ENCODE measurements at regions of chr13 and their contacts with region 1.

Region 1: GRCh38 chr13:27953676-27954405 is 15.3 kb downstream of the CDX2 start:
- DNase-seq: peak; percentile 19
- ATAC-seq: peak; percentile 96
- H3K4me3 ChIP-seq: peak overlapping the region; percentile 45 to 68 (median 53); a peak in 5 of 6 replicates
- H3K27ac ChIP-seq: no peak overlapping the region
- H3K4me1 ChIP-seq: peaks cover 26% of the 10 kb centered on the region
- H3K27me3 ChIP-seq: peaks cover 0 to 4% of the 10 kb centered on the region in 2 experiments; a peak in 1 of 5 replicates
- CTCF ChIP-seq: peak; percentile 74
- EP300 ChIP-seq: no peak
- POLR2A ChIP-seq: no peak
- RAD21 ChIP-seq: peak; percentile 84

Region 2: GRCh38 chr13:27665333-27665732 is 288.5 kb before region 1 on chr13:
- CTCF ChIA-PET with region 1: no interaction called
- POLR2A ChIA-PET with region 1: no interaction called
- in situ Hi-C with region 1: no loop called
- intact Hi-C with region 1: no loop called
- DNase-seq: no peak
- ATAC-seq: no peak
- H3K4me3 ChIP-seq: no peak overlapping the region
- H3K27ac ChIP-seq: no peak overlapping the region
- H3K4me1 ChIP-seq: peaks cover 8% of the 10 kb centered on the region
- H3K27me3 ChIP-seq: no peaks in the 10 kb centered on the region
- CTCF ChIP-seq: no peak
- EP300 ChIP-seq: no peak
- POLR2A ChIP-seq: no peak
- RAD21 ChIP-seq: no peak

Region 3: DNA sequence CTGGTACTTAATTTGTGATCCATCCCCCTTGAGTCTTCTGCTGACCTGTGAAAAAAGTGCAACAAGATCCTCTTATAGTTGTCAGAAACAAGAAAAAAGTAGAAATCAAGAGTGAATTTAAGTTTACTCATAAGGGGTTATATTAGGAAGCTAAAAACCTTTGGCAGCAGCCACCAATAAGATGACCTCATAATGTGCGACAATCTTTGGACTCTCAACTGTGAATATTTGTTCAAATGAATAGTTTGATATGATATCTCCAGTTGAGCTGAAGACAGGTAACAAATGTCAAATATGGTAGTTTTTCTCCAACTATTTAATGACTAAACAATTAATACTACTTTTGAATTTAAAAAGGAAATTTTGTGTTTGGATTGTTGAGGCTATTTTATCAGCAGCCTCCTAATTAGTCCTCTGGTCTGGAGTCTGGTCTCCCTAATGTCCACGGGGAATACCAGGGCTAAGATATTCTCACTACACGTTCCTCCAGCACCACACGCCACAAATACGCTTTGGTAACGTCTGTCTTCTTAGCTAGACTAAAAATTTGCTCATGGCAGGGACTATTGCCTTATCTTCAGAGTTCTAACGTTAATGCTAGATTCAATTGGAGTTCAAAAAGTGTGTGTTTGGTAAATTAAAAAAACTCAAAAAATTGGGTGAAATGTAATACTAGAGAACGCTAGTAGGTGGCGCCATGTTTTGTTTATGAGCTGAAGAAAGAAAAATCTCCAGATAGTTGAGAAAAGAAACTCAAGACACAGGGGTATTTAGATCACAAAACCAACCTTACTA is 85.0 kb before region 1 on chr13:
- CTCF ChIA-PET with region 1: interaction called, 12 read pairs
- POLR2A ChIA-PET with region 1: no interaction called
- in situ Hi-C with region 1: no loop called
- intact Hi-C with region 1: loop called (anchors 1 kb)
- DNase-seq: no peak
- ATAC-seq: no peak
- H3K4me3 ChIP-seq: no peak overlapping the region
- H3K27ac ChIP-seq: no peak overlapping the region
- H3K4me1 ChIP-seq: peaks cover 15% of the 10 kb centered on the region
- H3K27me3 ChIP-seq: no peaks in the 10 kb centered on the region
- CTCF ChIP-seq: peak; percentile 48; the same call in 1 of the 2 replicates
- EP300 ChIP-seq: no peak
- POLR2A ChIP-seq: no peak
- RAD21 ChIP-seq: no peak

Measured in HepG2 (cell line).